Testis (tissue), 5 donors: ENCODE measurements at regions of chr21 and their contacts with region 1.

Region 1: DNA sequence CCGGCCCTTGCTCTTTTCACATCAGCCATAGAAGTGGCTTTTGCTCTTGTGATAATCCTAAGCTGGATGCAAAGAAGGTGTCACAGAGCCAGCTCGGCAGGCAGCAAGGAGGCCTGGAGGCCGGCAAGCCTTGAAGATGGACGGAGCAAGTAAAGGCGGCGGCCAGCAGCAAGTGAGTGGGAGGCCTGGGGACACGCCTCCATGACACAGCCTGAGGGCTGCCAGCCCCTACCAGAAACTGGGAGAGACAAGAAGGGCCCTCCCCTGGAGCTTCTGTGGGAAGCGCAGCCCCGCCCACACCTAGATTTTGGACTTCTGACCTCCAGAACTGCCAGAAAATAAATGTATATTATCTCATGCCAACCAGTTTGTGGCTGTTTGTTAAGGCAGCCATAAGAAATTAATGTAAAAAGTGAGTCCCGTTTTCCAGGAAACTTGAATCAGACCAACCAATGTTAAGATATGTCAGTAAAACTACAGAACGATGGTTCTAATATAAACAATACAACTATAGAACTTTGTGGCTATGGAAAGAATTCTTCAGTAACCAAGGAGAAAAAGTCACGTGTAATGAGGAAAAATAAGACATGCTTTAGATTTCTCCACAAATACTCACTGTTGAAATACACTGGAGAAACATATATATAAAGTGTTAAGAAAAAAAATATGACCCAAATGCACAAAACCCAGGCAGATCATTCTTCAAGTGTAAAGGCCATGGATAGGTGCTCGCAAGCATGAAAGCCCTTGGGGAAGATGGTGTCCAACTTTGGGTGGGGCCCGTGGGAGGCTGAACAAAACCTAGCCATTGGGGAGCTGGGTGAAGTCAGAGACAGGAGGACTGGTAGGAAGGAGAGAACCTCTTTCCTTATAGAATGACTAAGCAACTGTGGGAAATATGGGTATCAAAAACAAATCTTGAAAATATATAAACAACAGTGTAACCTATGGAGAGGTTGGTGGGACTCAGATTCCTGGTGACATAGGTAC is 50.0 kb downstream of the BACE2 start:
- DNase-seq: peak; percentile 20
- H3K4me3 ChIP-seq: no peak overlapping the region
- H3K27ac ChIP-seq: no peak overlapping the region
- H3K4me1 ChIP-seq: no peaks in the 10 kb centered on the region
- H3K27me3 ChIP-seq: no peaks in the 10 kb centered on the region
- CTCF ChIP-seq: no peak
- POLR2A ChIP-seq: no peak

Region 2: DNA sequence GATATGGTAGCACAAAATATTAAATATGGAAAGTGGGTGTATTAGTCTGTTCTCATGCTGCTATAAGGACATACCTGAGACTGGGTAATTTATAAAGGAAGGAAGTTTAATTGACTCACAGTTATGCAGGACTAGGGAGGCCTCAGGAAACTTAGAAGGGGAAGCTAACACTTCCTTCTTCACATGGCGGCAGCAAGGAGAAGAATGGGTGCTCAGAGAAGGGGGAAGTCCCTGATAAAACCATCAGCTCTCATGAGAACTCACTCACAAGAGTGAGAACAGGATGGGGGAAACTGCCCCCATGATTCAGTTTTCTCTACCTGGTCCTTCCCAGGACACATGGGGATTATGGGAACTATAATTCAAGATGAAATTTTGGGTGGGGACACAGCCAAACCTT is 65.8 kb before region 1 on chr21:
- intact Hi-C with region 1: loop called (anchors 10 kb)
- DNase-seq: no peak
- H3K4me3 ChIP-seq: no peak overlapping the region
- H3K27ac ChIP-seq: no peak overlapping the region
- H3K4me1 ChIP-seq: no peaks in the 10 kb centered on the region
- H3K27me3 ChIP-seq: no peaks in the 10 kb centered on the region
- CTCF ChIP-seq: no peak
- POLR2A ChIP-seq: no peak